Ascending aorta (tissue), 2 donors: ENCODE measurements at regions of chr17 and their contacts with region 1.

Region 1: GRCh38 chr17:34199932-34200534 is 55.1 kb upstream of the CCL2 start:
- DNase-seq: peak; percentile 14 to 88
- H3K4me3 ChIP-seq: no peak overlapping the region
- H3K27ac ChIP-seq: no peak overlapping the region
- H3K4me1 ChIP-seq: peaks cover 0 to 3% of the 10 kb centered on the region in 2 donors
- H3K27me3 ChIP-seq: no peaks in the 10 kb centered on the region
- CTCF ChIP-seq: peak; percentile 99 to 100 (median 100)

Region 2: DNA sequence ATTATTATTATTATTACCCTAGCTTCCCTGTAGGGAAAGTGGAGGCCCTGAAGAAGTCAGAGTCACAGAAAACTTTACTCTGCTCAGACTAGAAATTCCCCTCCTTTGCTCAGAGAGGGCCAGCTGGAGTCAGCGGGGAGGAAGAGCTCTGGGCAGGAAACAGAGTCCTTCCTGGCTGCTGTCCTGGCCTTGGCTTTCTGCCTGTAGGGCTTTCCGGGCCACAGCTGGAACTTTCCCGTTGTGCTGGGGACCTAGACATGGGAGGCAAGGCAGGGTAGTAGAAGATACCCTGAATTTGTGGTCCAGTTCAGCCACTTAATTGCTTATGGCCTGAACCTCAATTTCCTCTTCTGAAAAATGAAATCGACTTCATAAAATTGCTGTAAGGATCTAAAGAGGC is 41.0 kb after region 1 on chr17:
- intact Hi-C with region 1: loop called (anchors 5 kb)
- DNase-seq: no peak
- H3K4me3 ChIP-seq: no peak overlapping the region
- H3K27ac ChIP-seq: no peak overlapping the region
- H3K4me1 ChIP-seq: peaks cover 0 to 8% of the 10 kb centered on the region in 2 donors
- H3K27me3 ChIP-seq: no peaks in the 10 kb centered on the region
- CTCF ChIP-seq: no peak

Region 3: GRCh38 chr17:34306466-34306865 is 106.4 kb after region 1 on chr17:
- intact Hi-C with region 1: loop called (anchors 1 kb)
- DNase-seq: peak in 1 of 2 donors; percentile 69
- H3K4me3 ChIP-seq: no peak overlapping the region
- H3K27ac ChIP-seq: no peak overlapping the region
- H3K4me1 ChIP-seq: peaks cover 0 to 5% of the 10 kb centered on the region in 2 donors
- H3K27me3 ChIP-seq: no peaks in the 10 kb centered on the region
- CTCF ChIP-seq: peak; percentile 48 to 60 (median 51)

Region 4: DNA sequence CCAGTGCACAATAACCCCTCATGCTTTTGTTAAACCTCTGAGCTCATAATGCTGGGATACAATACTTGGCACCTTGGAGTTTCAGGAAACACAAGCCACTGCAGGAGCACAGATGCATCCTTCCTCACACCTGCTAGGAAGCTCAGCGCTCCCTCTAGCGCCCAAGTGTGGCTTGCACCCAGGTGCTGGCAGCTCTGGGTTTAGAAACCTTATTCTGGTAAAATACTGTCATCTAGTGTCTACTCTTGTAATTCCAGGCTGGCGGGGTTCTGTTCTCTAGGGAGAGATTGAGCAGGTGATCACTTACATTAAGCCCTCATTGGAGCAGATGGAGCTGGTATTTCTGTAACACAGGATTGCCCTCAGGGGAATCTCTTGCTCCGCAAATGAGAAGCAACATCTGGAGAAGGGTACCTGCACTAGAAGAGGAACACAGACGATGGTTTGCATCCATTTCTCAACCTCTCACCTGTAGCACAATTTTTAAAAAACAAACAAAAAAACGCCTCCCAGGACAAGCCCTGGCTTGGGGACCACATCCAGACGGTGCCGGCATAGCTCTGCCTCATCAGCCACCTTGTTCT is 161.5 kb after region 1 on chr17:
- intact Hi-C with region 1: loop called (anchors 1 kb)
- DNase-seq: peak; percentile 45 to 92
- H3K4me3 ChIP-seq: no peak overlapping the region
- H3K27ac ChIP-seq: no peak overlapping the region
- H3K4me1 ChIP-seq: no peaks in the 10 kb centered on the region
- H3K27me3 ChIP-seq: no peaks in the 10 kb centered on the region
- CTCF ChIP-seq: peak; percentile 98

Region 5: GRCh38 chr17:34740565-34741520 is 540.8 kb after region 1 on chr17:
- intact Hi-C with region 1: no loop called
- DNase-seq: peak in 1 of 2 donors; percentile 27
- H3K4me3 ChIP-seq: no peak overlapping the region
- H3K27ac ChIP-seq: no peak overlapping the region
- H3K4me1 ChIP-seq: no peaks in the 10 kb centered on the region
- H3K27me3 ChIP-seq: no peaks in the 10 kb centered on the region
- CTCF ChIP-seq: no peak